Esophagus muscularis mucosa (tissue), 4 donors: ENCODE measurements at regions of chr20 and their contacts with region 1.

Region 1: DNA sequence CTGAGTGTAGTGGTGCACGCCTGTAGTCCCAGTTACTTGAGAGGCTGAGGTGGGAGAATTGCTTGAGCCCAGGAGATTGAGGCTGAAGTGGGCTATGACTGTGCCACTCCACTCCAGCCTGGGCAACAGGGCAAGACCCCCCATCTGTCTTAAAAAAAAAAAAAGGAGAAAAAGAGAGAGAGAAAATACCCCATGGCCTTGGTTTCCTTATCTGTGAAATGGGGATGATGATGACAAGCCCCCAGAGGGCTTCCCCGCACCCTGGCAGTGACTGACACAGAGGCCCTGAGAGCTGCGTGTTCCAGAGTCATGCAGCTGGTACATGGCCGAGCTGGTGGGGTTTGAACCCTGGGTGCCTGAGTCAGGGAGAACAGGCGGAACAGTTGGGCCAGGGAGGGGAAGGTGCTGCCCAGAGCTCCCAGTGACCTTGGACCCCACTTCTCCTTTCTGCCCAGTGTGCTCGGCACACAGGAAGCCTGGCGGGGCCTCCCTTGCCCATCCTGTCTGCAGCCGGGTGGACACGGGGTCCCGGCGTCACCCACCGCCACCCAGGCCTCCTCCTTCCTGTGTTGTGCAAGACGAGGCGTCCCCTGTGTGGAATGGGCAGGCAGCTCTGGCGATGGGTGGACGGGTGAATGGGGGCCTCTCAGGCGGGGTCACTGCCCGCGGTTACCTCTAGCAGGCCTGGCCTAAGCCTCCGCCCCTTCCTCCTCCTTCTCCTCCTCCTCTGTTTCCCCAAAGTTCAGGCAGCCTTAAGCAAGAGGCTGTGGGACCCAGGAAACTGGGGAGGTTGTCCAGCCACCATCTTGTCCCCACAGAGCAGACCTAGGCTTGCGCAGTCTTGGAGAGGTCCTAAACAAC is 84.2 kb downstream of the CEBPB start:
- DNase-seq: peak; percentile 94
- H3K4me3 ChIP-seq: no peak overlapping the region
- H3K27ac ChIP-seq: peak overlapping the region; percentile 12 to 65 (median 54)
- H3K4me1 ChIP-seq: peaks cover 23 to 38% (median 34%) of the 10 kb centered on the region in 4 donors
- H3K27me3 ChIP-seq: peaks cover 0 to 7% (median 0%) of the 10 kb centered on the region in 4 donors
- CTCF ChIP-seq: no peak
- EP300 ChIP-seq: peak; percentile 57
- POLR2A ChIP-seq: no peak

Region 2: GRCh38 chr20:50200482-50201104 is 74.2 kb before region 1 on chr20:
- intact Hi-C with region 1: loop called (anchors 5 kb)
- DNase-seq: no peak
- H3K4me3 ChIP-seq: no peak overlapping the region
- H3K27ac ChIP-seq: no peak overlapping the region
- H3K4me1 ChIP-seq: peaks cover 0 to 11% (median 6%) of the 10 kb centered on the region in 4 donors
- H3K27me3 ChIP-seq: no peaks in the 10 kb centered on the region
- CTCF ChIP-seq: no peak
- EP300 ChIP-seq: no peak
- POLR2A ChIP-seq: no peak